Posterior vena cava (tissue), 2 donors: ENCODE measurements at regions of chr5 and their contacts with region 1.

Region 1: DNA sequence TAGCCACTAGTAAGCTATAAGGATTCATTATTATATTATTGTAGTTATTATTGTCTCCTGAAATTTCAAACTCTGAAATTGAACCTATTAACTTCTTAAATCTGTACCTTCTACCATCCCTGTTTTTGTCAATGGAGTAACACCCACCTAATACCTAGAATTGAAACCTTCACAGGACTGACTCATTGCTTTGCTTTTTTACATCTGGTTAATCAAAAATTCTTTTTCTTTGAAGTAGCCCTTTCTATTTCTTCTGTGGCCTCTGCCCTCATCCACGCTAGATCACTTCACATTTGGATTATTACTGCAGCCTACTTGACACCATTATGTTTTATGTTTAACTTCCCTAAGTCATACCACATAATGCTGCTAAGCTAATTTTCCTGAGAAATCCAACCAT is 35.6 kb downstream of the RBM27 start:
- DNase-seq: no peak

Region 2: DNA sequence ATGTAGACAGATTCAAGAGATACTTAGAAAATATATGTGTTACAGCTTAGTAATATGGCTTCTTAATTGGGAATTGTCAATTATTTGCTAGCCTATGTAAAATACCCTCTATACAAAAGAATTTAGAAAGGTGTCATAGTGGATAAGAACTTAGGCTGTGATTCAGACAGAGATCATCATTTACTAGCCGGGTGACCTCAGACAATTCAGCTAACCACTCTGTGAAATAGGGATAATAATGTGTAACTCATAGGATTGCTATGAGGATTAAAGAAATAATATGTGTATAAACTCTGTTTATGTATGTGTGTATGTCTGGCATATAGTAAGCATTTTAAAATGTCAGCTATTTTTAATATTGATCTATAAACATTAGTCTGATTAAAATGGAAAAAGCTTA is 50.6 kb before region 1 on chr5:
- intact Hi-C with region 1: loop called in 1 of 2 experiments (anchors 10 kb)
- DNase-seq: no peak